Left ventricle myocardium superior (tissue), 1 donor: ENCODE measurements at regions of chr6 and their contacts with region 1.

Region 1: DNA sequence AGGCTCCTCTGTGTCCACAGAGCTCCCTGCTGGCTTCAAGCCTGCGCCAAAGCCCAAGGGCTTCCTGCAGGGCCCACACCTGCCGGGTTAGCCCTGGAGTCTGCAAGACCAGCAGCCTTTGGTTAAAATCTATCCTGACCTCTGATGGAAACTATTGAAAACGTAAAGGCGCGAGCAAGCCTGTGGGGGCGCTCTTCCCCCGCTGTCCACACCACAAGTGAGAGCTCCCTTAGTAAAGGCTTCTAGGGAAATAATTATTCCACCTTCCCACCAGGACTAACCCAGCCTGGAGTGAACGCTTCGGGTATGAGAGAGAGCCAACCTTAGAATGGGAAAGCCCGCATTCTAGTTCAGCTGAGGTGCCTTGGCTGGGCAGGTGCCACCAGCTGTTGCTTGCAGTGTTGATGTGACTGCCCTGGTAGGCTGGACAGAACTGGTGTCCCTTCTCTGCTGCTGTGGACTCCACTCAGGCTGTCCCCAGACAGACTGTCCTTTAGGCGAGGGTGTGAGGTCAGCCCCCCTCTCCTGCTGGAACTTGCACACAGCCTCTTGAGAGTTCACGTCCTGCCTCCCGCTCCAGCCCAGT is 68.7 kb downstream of the SYTL3 start:
- DNase-seq: peak; percentile 52
- ATAC-seq: peak; percentile 59

Region 2: GRCh38 chr6:158270389-158271127 is 448.0 kb before region 1 on chr6:
- intact Hi-C with region 1: no loop called
- DNase-seq: peak; percentile 33
- ATAC-seq: peak; percentile 76

Region 3: DNA sequence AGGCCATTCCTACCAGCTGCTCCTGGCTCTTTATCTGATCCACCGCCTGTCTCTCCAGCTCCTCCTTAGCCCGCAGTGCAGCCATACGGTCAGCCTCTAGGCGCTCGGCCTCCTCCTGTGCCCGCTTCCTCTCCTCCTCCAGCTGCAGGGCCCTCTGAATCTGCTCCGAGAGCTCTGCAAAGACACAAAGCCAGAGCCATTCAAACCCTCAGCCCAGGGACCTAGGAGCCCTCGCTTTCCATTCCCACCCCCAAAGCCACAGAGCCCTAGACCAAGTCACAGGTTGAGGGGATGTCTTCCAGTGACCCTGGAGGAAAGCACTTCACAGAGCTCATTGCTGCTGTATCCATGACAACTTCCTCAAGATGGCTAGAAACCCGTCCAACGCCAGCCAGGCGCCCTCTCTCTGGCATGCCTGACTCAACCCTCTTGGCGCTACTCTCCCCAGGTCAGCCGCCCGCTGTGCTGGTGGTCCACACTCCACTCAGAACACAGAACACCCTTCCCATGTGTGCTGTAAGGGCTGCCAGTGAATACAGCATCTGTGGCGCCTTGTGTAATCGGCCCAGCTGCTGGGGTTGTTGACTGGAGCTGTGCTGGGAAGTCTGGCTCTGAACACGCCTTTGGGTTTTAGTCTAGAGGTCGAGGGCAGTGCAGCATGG is 51.3 kb after region 1 on chr6:
- intact Hi-C with region 1: loop called (anchors 10 kb)
- DNase-seq: peak; percentile 75
- ATAC-seq: peak; percentile 70